GM13976 (cell line): ENCODE measurements at regions of chr3 and their contacts with region 1.

Region 1: DNA sequence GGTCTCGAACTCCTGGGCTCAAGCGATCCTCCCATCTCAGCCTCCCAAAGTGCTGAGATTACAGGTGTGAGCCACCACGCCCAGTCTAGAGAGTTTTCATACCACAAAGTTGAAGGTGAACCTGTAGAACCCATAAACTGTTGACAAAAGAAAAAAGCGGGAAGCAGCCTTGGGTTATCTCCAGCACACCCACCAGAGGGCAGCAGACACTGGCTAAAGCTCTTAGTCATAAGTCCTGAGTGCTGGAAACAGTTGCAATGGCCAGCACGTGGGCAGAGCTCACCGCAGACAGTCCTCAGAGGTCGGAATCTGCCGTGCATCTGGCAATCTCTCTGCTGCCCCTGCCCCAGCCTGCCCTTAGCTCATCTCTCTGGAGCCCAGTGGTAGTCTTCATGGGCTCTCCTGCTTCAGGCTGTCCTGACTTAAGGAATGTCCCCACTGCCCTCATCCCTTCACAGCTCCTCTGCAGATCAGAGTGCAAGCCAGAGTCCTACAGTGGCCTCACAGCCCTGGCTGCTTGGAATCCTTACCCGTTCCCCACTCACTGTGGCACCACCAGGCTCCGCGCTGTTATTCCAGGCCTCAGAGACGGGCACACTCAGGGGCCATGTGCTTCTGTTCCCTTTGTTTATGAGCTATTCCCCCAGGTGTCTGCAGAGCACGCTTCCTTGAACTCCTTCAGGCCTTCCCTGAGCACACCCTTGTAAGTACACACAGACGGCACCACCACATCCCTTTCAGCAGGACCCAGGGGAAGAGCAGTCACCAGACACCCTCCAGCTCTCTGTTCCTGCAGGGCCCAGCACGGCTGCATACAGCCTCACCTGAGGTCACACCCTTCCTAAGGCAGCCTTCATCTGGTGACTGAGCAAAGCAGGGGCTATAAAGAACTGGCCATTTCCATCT is 8.8 kb upstream of the ELP6 start:
- DNase-seq: peak; percentile 88
- CTCF ChIP-seq: peak; percentile 85

Region 2: GRCh38 chr3:47781685-47782445 is 259.5 kb after region 1 on chr3 and contains the start of gene SMARCC1:
- in situ Hi-C with region 1: no loop called
- DNase-seq: peak; percentile 98
- CTCF ChIP-seq: no peak

Region 3: DNA sequence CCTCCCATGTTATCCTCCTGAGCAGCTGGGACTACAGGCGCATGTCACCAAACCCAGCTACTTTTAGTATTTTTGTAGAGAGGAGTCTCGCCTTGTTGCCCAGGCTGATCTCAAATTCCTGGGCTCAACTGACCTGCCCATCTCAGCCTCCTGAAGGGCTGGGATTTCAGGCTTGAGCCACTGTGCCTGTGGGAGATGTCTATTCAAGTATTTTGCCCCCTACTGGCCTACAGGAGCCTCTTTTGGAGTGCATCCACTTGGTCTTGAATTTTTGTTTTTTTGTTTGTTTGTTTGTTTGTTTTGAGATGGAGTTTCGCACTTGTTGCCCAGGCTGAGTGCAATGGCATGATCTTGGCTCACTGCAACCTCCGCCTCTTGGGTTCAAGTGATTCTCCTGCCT is 277.4 kb after region 1 on chr3:
- in situ Hi-C with region 1: loop called (anchors 5 kb)
- DNase-seq: no peak
- CTCF ChIP-seq: no peak